ENCODE measurements at regions of chr6 and their contacts with region 1.

Region 1: GRCh38 chr6:105087571-105088211 is 92.1 kb downstream of the POPDC3 start:
- DNase-seq: peak; percentile 63
- H3K4me3 Mint-ChIP-seq: no peak overlapping the region
- H3K27ac Mint-ChIP-seq: no peak overlapping the region
- H3K4me1 Mint-ChIP-seq: peaks cover 6% of the 10 kb centered on the region
- H3K27me3 Mint-ChIP-seq: no peaks in the 10 kb centered on the region
- CTCF ChIP-seq: peak; percentile 60

Region 2: GRCh38 chr6:105179244-105180065 is 91.8 kb after region 1 on chr6 and contains the start of gene POPDC3:
- CTCF ChIA-PET with region 1: interaction called, 6 read pairs
- POLR2A ChIA-PET with region 1: interaction called, 20 read pairs
- intact Hi-C with region 1: no loop called
- DNase-seq: peak; percentile 56
- H3K4me3 Mint-ChIP-seq: peak within 1 kb of the TSS; percentile 72
- H3K27ac Mint-ChIP-seq: peak within 1 kb of the TSS; percentile 69
- H3K4me1 Mint-ChIP-seq: peaks cover 16% of the 10 kb centered on the region
- H3K27me3 Mint-ChIP-seq: no peaks in the 10 kb centered on the region
- CTCF ChIP-seq: no peak
- total RNA-seq, gene POPDC3: 7.3 and 7.9 TPM in 2 replicates

Region 3: DNA sequence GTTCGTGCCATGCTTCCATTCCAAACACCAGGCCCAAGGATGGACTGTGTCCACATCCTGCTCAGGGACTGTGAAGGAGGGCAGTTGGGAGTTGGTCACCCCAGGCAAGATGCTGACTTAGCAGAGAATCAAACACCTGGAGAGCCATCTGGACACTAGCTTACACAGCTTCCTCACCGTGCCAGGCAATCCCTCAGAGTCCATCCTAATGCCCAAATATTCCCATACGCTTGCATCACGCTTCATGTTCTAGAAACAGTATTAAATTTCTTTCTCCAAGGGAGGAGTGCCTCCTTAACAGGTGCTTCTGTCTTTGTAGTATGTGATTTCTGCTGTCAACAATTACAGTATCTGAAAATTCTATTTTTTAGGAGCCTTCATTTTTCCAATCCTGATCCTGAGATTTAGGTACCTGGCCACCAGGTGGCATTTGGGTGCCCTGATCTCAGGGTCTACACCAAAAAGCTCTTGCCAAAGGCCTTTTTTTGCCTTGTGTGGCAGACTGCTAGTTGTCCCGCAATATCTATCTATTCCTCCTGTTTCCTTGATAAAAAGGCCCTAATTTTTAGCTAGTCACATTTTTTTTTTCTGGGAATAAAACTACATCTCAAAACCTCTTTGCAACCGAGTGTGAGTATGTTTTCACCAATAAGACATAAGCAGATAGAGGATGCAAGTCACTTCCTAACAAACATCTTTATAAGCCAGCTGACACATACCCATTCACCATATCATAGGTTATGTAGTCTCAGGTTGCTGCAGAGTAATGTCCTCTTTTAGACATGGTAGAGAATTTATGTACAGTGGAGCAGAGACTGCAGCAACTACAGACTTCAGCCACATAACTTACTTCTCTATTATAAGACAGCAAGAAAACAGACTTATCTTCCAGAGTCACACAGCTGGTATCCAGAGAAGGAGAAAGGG is 230.2 kb after region 1 on chr6:
- CTCF ChIA-PET with region 1: interaction called, 41 read pairs
- POLR2A ChIA-PET with region 1: interaction called, 6 read pairs
- intact Hi-C with region 1: loop called (anchors 5 kb)
- DNase-seq: peak; percentile 44
- H3K4me3 Mint-ChIP-seq: no peak overlapping the region
- H3K27ac Mint-ChIP-seq: peak overlapping the region; percentile 69
- H3K4me1 Mint-ChIP-seq: peaks cover 20% of the 10 kb centered on the region
- H3K27me3 Mint-ChIP-seq: no peaks in the 10 kb centered on the region
- CTCF ChIP-seq: peak; percentile 26

Region 4: DNA sequence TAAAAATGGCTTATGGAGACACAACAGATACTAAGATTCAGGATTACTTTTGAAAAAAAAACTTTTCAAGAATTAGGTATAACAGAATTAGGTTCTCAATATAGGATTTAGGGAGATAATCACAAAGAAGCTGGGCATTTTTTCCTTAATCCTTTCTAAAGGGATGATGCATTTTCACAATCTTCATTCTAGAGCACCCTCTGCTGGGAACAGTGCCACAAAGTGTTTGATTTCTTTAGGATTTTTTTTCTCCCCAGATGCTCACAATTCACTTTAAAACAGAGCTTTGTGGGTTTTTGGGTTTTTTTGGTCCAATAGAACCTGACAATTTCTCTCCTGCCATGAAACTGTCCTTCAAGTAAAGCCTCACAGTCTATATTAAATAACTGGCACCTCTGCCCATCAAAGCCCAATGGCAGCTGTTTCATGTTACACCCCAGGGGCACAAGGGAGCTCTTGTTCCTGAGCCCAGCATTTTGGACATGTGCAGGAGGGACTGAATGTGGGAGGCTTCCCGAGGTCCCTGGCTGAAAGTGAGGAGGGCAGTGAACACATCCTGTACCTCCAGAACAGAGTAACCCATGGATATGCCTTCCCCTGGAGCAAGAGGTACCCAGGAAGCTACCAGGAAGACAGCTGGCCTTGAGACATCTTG is 275.5 kb after region 1 on chr6:
- CTCF ChIA-PET with region 1: interaction called, 117 read pairs
- POLR2A ChIA-PET with region 1: interaction called, 10 read pairs
- intact Hi-C with region 1: loop called (anchors 1 kb)
- DNase-seq: peak; percentile 51
- H3K4me3 Mint-ChIP-seq: no peak overlapping the region
- H3K27ac Mint-ChIP-seq: peak overlapping the region; percentile 78
- H3K4me1 Mint-ChIP-seq: peaks cover 42% of the 10 kb centered on the region
- H3K27me3 Mint-ChIP-seq: no peaks in the 10 kb centered on the region
- CTCF ChIP-seq: peak; percentile 36

Region 5: GRCh38 chr6:105397987-105398386 is 310.3 kb after region 1 on chr6:
- CTCF ChIA-PET with region 1: interaction called, 33 read pairs
- POLR2A ChIA-PET with region 1: interaction called, 15 read pairs
- intact Hi-C with region 1: loop called (anchors 1 kb)
- DNase-seq: no peak
- H3K4me3 Mint-ChIP-seq: no peak overlapping the region
- H3K27ac Mint-ChIP-seq: no peak overlapping the region
- H3K4me1 Mint-ChIP-seq: peaks cover 30% of the 10 kb centered on the region
- H3K27me3 Mint-ChIP-seq: no peaks in the 10 kb centered on the region
- CTCF ChIP-seq: no peak

Region 6: DNA sequence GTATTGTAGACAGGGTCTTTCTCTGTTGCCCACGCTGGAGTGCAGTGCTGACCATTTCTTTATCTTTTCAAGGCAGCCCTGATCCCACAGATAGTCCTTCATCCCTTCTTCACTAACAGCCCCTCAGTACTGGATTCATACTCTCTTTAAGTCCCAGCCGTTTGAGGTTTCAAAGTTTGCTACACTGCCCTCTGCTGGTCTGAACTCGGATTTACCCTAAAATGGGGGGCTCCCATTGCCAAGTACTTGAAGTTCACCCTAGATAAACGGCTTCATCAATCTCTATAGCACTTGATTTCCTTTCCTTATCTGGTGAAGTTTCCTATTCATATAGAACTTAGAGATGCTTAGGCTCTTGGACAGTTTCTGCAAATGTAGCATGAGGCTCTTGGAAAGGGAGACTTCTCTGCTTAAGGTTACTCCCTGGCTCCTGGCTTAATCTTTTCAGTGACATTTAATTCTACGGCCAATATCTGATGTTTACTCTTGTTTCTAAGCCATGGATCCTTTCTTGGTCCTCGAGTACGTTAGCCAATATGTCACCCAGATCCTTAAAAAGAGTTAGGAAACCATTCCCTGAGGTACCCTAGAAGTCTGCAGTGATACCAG is 336.6 kb after region 1 on chr6:
- CTCF ChIA-PET with region 1: interaction called, 32 read pairs
- POLR2A ChIA-PET with region 1: interaction called, 3 read pairs
- intact Hi-C with region 1: loop called (anchors 1 kb)
- DNase-seq: peak; percentile 68
- H3K4me3 Mint-ChIP-seq: no peak overlapping the region
- H3K27ac Mint-ChIP-seq: no peak overlapping the region
- H3K4me1 Mint-ChIP-seq: peaks cover 24% of the 10 kb centered on the region
- H3K27me3 Mint-ChIP-seq: no peaks in the 10 kb centered on the region
- CTCF ChIP-seq: peak; percentile 47